Activated CD4-positive, alpha-beta memory T cell treated with anti-CD3 and anti-CD28 coated beads, Interleukin-2, amount 10 ng/mL, durations not matched to agents 7 days and 5 days (primary cell): ENCODE measurements at regions of chr15 and their contacts with region 1.

Region 1: GRCh38 chr15:31435261-31435911 is 108.8 kb downstream of the KLF13 start:
- DNase-seq: peak; percentile 88
- H3K4me3 Mint-ChIP-seq: peak overlapping the region; percentile 75
- H3K27ac Mint-ChIP-seq: peak overlapping the region; percentile 100
- H3K4me1 Mint-ChIP-seq: peaks cover 77% of the 10 kb centered on the region
- H3K27me3 Mint-ChIP-seq: no peaks in the 10 kb centered on the region

Region 2: GRCh38 chr15:31080591-31081014 is 354.8 kb before region 1 on chr15:
- CTCF ChIA-PET with region 1: no interaction called
- POLR2A ChIA-PET with region 1: no interaction called
- DNase-seq: peak; percentile 31
- H3K4me3 Mint-ChIP-seq: no peak overlapping the region
- H3K27ac Mint-ChIP-seq: no peak overlapping the region
- H3K4me1 Mint-ChIP-seq: peaks cover 5% of the 10 kb centered on the region
- H3K27me3 Mint-ChIP-seq: peaks cover 30% of the 10 kb centered on the region

Region 3: DNA sequence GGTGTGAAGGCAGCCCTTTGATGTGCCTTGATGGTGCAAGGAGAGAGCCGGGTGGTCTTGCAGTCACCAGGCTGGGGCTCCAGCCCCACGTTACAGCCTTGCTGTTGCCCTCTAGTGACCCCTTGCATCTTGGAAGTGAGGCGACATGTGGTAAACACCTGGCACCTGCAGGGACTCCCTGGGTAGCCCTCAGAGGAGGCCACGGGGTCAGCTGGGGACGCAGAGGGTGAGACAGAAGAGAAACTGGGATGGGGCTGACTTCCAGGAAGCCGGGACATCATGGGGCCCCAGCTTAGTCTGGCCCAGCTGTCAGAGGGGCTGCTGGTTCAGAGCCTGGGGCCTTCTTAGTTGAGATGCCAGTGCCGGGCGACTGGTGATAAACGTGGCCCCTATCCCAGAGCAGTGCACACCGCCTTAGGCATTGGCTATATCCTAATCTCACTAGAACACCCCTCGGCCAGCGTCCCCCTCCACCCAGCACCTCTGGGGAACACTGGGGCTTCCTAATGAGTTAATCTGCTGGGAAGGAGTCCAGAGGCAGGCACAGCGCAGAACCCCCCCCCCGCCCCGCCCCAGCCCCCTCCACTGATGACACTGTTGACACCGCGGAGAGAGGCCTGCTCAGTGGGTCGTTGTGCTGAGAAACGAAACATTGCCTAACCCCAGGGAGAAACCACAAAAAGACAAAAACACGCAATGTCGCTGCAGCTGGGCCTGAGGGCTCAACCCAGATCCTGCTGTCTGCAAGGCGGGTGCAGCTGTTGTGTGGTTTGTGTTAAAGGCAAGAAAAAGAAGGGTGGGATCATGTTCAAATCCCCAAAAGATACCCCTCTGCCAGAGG is 169.3 kb before region 1 on chr15:
- CTCF ChIA-PET with region 1: interaction called, 6 read pairs
- POLR2A ChIA-PET with region 1: interaction called, 26 read pairs
- DNase-seq: peak; percentile 82
- H3K4me3 Mint-ChIP-seq: peak overlapping the region; percentile 22
- H3K27ac Mint-ChIP-seq: peak overlapping the region; percentile 89
- H3K4me1 Mint-ChIP-seq: peaks cover 84% of the 10 kb centered on the region
- H3K27me3 Mint-ChIP-seq: peaks cover 8% of the 10 kb centered on the region

Region 4: DNA sequence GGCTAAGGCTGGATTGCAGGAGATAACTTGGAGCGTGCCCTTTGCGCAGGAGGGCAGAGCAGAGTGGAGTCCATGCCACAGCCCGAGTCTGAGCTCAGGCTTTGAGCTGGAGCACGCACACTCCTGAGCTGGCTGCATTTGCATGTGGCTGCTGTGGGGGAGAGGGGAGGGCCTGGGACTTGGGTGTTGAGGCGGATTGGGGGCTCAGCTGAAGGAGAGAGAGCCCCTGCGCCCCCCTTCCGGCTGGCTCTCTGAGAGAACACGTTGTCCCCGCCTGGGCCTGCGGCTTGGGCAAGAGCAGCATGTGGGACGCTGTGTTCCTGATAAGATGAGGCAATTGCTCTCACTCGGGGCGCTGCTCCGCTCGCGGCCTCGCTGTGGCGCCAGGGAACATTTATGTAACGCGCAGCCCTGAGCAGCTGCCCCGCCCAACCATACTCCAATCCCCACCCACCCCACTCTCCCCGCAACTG is 69.7 kb before region 1 on chr15:
- CTCF ChIA-PET with region 1: interaction called, 162 read pairs
- POLR2A ChIA-PET with region 1: interaction called, 220 read pairs
- DNase-seq: peak; percentile 86
- H3K4me3 Mint-ChIP-seq: peak overlapping the region; percentile 64
- H3K27ac Mint-ChIP-seq: peak overlapping the region; percentile 99
- H3K4me1 Mint-ChIP-seq: peaks cover 99% of the 10 kb centered on the region
- H3K27me3 Mint-ChIP-seq: no peaks in the 10 kb centered on the region

Region 5: DNA sequence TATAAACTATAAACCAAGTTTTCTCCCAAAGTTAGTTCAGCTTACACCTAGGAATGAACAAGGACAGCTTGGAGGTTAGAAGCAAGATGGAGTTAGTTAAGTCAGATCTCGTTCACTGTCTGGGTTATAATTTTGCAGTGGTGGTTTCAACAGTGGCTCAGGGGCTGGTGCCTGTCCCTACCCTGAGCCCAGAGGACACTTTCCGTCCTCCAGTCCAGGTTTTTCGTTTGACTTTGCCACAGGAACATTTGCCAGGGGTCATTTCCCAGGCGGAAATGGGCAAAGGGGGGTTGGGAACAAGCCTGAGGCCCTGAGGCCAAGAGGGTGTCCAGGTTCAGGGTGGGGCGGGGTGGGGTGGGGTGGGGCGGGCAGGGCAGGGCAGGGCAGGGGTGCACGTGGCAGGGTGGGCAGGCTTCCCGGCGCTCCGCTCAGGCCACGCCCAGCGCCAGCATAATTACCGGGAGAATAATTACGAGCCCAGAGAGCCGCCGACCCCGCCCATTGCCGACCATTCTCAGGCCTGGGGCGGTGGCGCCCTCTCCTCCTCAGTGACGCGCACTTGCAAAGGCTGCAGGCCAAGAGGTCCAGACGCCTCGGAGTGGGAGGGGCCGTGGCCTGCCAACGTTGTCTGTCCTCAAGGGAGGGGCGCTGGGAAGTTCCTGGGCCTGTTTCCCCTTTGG is 38.4 kb before region 1 on chr15:
- CTCF ChIA-PET with region 1: interaction called, 19 read pairs
- POLR2A ChIA-PET with region 1: interaction called, 56 read pairs
- DNase-seq: no peak
- H3K4me3 Mint-ChIP-seq: no peak overlapping the region
- H3K27ac Mint-ChIP-seq: no peak overlapping the region
- H3K4me1 Mint-ChIP-seq: peaks cover 42% of the 10 kb centered on the region
- H3K27me3 Mint-ChIP-seq: no peaks in the 10 kb centered on the region

Region 6: GRCh38 chr15:31472636-31473384 is 37.4 kb after region 1 on chr15:
- CTCF ChIA-PET with region 1: interaction called, 10 read pairs
- POLR2A ChIA-PET with region 1: interaction called, 47 read pairs
- DNase-seq: peak; percentile 69
- H3K4me3 Mint-ChIP-seq: peak overlapping the region; percentile 65
- H3K27ac Mint-ChIP-seq: peak overlapping the region; percentile 80
- H3K4me1 Mint-ChIP-seq: peaks cover 35% of the 10 kb centered on the region
- H3K27me3 Mint-ChIP-seq: no peaks in the 10 kb centered on the region